Activated B cell treated with CpG ODN at 0.5 μM for 24 hours (primary cell): ENCODE measurements at regions of chr3 and their contacts with region 1.

Region 1: DNA sequence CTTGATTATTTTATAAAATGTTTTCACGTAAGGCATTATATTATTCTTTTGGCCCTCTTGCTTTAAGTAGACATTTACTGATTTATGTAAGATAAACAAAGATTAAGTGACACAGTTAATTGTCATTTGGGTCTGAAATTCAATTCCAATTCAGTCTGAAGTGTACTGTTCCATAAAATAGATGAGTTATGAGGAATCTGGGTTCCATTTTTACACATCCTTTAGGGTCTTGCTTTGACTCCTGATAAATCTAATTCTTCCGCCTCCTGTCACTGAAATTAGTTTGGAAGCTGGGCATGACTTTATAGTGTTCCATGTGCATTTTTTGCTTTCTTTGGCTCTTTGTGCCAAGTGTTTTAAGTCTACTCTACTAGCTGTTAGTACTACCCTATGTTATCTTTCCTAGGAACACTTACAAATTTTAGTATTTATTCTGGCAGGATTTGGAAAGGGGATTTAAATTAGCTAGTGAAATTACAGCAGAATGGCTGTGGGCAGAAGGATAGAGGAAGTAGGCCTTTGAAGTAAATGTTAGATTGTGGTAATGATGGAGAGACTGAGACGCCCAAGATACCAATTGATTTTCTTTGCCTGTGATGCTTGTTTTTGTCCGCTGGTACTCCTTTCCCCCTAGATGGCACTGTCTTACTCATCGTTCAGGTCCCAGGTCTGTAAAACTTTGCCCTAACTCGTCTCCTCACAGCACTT is 14.3 kb downstream of the ARL8B start:
- DNase-seq: no peak
- ATAC-seq: peak; percentile 70
- H3K4me3 Mint-ChIP-seq: peak overlapping the region; percentile 40
- H3K27ac Mint-ChIP-seq: peak overlapping the region; percentile 83
- H3K4me1 Mint-ChIP-seq: peaks cover 74% of the 10 kb centered on the region
- H3K27me3 Mint-ChIP-seq: no peaks in the 10 kb centered on the region
- CTCF ChIP-seq: peak; percentile 29

Region 2: GRCh38 chr3:5162102-5162501 is 25.7 kb after region 1 on chr3:
- CTCF ChIA-PET with region 1: interaction called, 3 read pairs
- POLR2A ChIA-PET with region 1: no interaction called
- intact Hi-C with region 1: loop called (anchors 2 kb)
- DNase-seq: no peak
- ATAC-seq: no peak
- H3K4me3 Mint-ChIP-seq: no peak overlapping the region
- H3K27ac Mint-ChIP-seq: no peak overlapping the region
- H3K4me1 Mint-ChIP-seq: peaks cover 76% of the 10 kb centered on the region
- H3K27me3 Mint-ChIP-seq: no peaks in the 10 kb centered on the region
- CTCF ChIP-seq: no peak

Region 3: DNA sequence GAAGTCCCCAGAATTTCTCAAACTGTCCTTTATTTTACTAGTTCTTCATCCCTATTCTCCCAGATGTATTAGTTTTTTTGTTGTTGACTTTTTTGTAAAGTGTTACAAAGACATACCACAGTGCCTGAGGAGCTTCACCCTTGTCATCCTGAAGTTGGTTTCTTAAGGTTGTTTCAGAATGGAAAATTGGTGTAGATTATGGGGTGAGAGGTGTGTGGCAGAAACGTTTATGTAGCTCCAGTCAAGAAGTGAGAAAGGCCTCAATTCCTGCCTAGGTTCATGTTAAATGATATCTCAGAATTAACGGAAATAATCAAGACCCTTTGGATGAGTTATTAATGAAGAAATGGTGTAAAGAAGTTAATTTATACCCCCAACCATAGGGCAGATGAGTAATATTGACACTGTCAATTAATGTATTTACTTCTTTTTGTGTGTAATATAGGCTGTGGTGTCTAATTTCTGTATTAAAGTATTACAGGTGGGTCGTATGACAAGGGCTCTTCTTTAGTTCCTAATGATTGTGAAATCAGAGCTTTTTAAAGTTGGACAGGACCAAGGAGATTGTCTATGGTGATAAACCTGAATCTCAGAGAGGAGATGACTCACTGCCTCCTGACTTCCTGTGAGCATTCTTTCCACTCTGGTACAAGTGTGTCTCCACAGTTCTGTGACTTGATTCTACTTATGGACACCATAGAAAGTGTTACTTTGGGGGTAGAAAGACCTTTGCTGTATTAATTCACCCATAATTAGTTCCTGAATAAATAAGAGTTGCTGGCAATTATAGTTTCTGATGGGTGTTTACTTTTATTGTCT is 58.2 kb after region 1 on chr3:
- CTCF ChIA-PET with region 1: interaction called, 8 read pairs
- POLR2A ChIA-PET with region 1: interaction called, 55 read pairs
- intact Hi-C with region 1: loop called (anchors 1 kb)
- DNase-seq: no peak
- ATAC-seq: peak; percentile 55
- H3K4me3 Mint-ChIP-seq: peak overlapping the region; percentile 62
- H3K27ac Mint-ChIP-seq: peak overlapping the region; percentile 89
- H3K4me1 Mint-ChIP-seq: peaks cover 94% of the 10 kb centered on the region
- H3K27me3 Mint-ChIP-seq: no peaks in the 10 kb centered on the region
- CTCF ChIP-seq: no peak

Region 4: GRCh38 chr3:5304789-5305683 is 168.7 kb after region 1 on chr3:
- CTCF ChIA-PET with region 1: no interaction called
- POLR2A ChIA-PET with region 1: no interaction called
- intact Hi-C with region 1: loop called (anchors 1 kb)
- DNase-seq: no peak
- ATAC-seq: peak; percentile 18
- H3K4me3 Mint-ChIP-seq: no peak overlapping the region
- H3K27ac Mint-ChIP-seq: no peak overlapping the region
- H3K4me1 Mint-ChIP-seq: peaks cover 4% of the 10 kb centered on the region
- H3K27me3 Mint-ChIP-seq: peaks cover 2% of the 10 kb centered on the region
- CTCF ChIP-seq: no peak

Region 5: GRCh38 chr3:5731094-5731493 is 594.7 kb after region 1 on chr3:
- CTCF ChIA-PET with region 1: no interaction called
- POLR2A ChIA-PET with region 1: no interaction called
- intact Hi-C with region 1: loop called (anchors 10 kb)
- DNase-seq: no peak
- ATAC-seq: no peak
- H3K4me3 Mint-ChIP-seq: no peak overlapping the region
- H3K27ac Mint-ChIP-seq: no peak overlapping the region
- H3K4me1 Mint-ChIP-seq: no peaks in the 10 kb centered on the region
- H3K27me3 Mint-ChIP-seq: no peaks in the 10 kb centered on the region
- CTCF ChIP-seq: no peak